ENCODE measurements at regions of chr3 and their contacts with region 1.

Region 1: GRCh38 chr3:38651154-38651789 is 1.8 kb upstream of the SCN5A start:
- DNase-seq: no peak
- H3K4me3 ChIP-seq: no peak overlapping the region
- H3K27me3 ChIP-seq: peaks cover 21% of the 10 kb centered on the region
- CTCF ChIP-seq: peak; percentile 99

Region 2: GRCh38 chr3:38521391-38521987 is 129.8 kb before region 1 on chr3:
- CTCF ChIA-PET with region 1: interaction called, 121 read pairs
- POLR2A ChIA-PET with region 1: no interaction called
- DNase-seq: no peak
- H3K4me3 ChIP-seq: no peak overlapping the region
- H3K27me3 ChIP-seq: no peaks in the 10 kb centered on the region
- CTCF ChIP-seq: peak; percentile 86

Region 3: DNA sequence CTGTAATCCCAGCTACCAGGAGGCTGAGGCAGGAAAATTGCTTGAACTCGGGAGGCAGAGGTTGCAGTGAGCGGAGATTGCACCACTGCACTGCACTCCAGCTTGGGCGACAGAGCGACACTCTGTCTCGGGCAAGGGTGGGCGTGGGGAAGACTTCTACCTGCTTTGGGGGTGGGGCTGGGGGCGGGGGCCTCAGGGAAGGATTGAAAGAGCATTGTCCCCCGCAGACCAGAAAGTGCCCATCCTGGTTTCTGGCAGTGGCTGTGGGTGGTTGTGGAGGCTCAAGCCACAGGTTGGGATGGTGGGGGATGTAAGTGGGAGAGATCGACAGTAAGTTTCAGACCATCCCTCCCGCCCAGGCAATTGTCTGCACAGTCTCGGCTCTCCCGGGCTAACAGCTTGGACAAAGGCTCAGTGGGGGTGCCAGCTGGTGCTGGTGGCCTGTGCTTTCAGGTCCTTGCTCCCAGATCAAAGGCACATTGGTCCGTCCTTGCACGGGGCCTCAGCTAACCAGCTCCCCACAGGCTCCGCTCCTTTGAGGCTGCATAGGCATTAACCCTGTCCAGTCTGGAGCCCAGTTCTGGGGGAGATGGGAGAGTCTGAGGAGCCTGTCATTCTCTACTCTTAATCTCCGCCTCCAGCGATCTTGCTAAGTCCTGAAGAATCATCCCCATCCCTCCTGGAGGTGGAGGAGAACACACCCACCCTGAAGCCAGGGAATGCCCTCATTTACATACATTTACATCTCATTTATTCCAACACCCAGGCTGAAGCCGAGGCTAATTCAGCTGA is 10.4 kb before region 1 on chr3:
- CTCF ChIA-PET with region 1: interaction called, 25 read pairs
- POLR2A ChIA-PET with region 1: no interaction called
- DNase-seq: no peak
- H3K4me3 ChIP-seq: no peak overlapping the region
- H3K27me3 ChIP-seq: peaks cover 3% of the 10 kb centered on the region
- CTCF ChIP-seq: no peak

Region 4: GRCh38 chr3:38669668-38670067 is 18.4 kb after region 1 on chr3:
- CTCF ChIA-PET with region 1: interaction called, 17 read pairs
- POLR2A ChIA-PET with region 1: no interaction called
- DNase-seq: no peak
- H3K4me3 ChIP-seq: no peak overlapping the region
- H3K27me3 ChIP-seq: peaks cover 1% of the 10 kb centered on the region; the same call in 1 of the 2 replicates
- CTCF ChIP-seq: no peak

Region 5: GRCh38 chr3:38843898-38844297 is 192.6 kb after region 1 on chr3:
- CTCF ChIA-PET with region 1: interaction called, 49 read pairs
- POLR2A ChIA-PET with region 1: no interaction called
- DNase-seq: no peak
- H3K4me3 ChIP-seq: no peak overlapping the region
- H3K27me3 ChIP-seq: peaks cover 6% of the 10 kb centered on the region
- CTCF ChIP-seq: peak; percentile 58

Region 6: DNA sequence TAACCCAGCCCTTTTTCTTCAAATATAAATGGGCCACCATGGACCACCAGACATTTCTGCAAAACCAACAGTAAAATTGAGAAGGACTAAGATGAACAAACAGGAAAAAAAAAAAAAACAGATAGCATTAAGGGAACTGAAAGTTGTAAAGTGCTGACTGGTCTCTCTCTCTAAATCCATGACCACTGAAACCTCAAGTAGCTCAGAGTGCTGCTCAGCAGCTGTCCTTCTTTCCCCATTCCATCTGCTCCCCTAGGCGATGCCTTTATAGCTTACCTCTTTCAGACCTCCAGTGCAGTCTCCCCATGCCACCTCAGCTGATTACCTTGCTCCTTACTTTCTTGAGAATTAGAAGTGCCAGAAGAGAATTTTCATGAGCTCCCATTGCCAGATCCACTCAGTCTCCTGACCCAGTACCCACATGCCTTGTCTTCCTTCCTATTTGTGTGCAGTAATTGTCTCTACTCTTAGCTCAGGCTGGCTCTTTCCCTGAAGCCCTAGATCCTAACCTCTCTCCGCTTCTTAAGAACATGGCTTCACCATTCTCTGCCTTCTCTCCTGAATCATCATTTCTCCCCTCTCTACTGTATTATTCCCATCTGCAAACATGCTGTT is 565.0 kb after region 1 on chr3:
- CTCF ChIA-PET with region 1: no interaction called
- POLR2A ChIA-PET with region 1: no interaction called
- DNase-seq: no peak
- H3K4me3 ChIP-seq: no peak overlapping the region
- H3K27me3 ChIP-seq: peaks cover 8% of the 10 kb centered on the region
- CTCF ChIP-seq: no peak